ENCODE measurements at regions of chr9 and their contacts with region 1.

Region 1: DNA sequence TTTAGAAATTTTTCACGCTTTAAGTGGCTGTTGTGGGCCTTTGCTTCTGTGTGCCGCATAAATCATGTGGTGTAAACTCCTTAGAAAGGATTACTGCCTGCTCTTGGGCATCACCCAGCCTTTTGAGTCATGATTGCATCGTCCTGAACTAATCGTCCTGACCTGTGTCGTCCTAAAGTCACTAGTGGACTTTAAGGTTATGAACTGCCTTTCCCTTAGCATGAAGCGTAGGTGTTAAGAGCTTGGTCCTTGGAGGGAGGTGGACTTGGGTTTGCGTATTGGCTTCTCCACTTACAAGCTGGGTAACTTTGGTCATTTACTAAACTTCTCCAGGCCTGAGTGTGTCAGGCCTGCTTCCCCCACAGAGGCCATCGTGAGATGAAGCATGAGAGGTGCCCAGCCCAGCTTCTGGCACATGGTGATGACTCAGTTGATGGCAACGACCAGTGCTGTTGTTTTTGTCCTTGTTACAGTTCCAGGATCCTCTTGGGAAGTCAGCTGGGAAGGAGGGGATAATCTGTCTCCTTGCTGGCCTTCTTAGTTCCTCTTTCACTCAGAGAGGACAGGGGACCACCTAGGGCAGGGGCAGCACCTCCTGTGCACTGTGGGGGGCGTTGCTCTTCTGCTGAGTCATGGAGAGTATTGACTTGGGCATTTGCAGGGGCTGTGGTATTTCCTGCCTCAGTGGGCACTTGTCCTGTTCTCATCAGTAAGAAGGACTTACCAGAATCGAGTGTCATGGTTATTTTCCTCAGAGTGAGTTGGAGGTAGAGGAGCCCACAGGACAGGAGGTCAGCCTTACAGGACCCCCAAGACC is 54.2 kb upstream of the NCS1 start:
- DNase-seq: no peak
- ATAC-seq: no peak
- H3K4me3 ChIP-seq: no peak overlapping the region
- H3K27ac ChIP-seq: no peak overlapping the region
- H3K4me1 ChIP-seq: peaks cover 8% of the 10 kb centered on the region
- H3K27me3 ChIP-seq: no peaks in the 10 kb centered on the region
- CTCF ChIP-seq: no peak
- EP300 ChIP-seq: no peak
- POLR2A ChIP-seq: no peak
- RAD21 ChIP-seq: no peak

Region 2: DNA sequence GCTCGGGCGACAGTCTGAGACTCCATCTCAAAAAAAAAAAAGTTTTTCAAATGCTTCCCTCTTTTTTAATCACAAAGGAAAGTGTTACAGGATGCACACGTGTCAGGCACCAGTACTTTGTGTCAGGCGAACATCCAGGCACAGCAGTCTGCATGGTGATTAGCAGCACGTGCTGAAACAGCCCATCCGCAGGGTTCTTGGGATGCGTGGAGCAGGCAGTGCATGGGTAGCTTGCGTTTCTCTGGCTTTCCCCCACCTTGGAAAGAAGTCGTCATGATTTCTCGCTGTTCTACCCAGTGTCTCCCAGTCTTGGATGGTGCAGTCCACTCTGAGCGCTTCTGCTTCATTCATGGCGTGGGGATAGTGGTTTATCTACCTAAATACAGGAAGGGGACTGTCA is 28.9 kb before region 1 on chr9:
- CTCF ChIA-PET with region 1: no interaction called
- POLR2A ChIA-PET with region 1: interaction called, 10 read pairs
- RAD21 ChIA-PET with region 1: no interaction called
- SMC1A ChIA-PET with region 1: interaction called, 4 read pairs
- in situ Hi-C with region 1: no loop called
- intact Hi-C with region 1: no loop called
- DNase-seq: no peak
- ATAC-seq: no peak
- H3K4me3 ChIP-seq: no peak overlapping the region
- H3K27ac ChIP-seq: no peak overlapping the region
- H3K4me1 ChIP-seq: no peaks in the 10 kb centered on the region
- H3K27me3 ChIP-seq: no peaks in the 10 kb centered on the region
- CTCF ChIP-seq: no peak
- EP300 ChIP-seq: no peak
- POLR2A ChIP-seq: no peak
- RAD21 ChIP-seq: no peak

Region 3: GRCh38 chr9:130128733-130129431 is 10.9 kb after region 1 on chr9:
- CTCF ChIA-PET with region 1: interaction called, 3 read pairs
- POLR2A ChIA-PET with region 1: interaction called, 6 read pairs
- RAD21 ChIA-PET with region 1: interaction called, 3 read pairs
- SMC1A ChIA-PET with region 1: interaction called, 10 read pairs
- in situ Hi-C with region 1: no loop called
- intact Hi-C with region 1: no loop called
- DNase-seq: peak; percentile 79
- ATAC-seq: peak; percentile 94
- H3K4me3 ChIP-seq: peak overlapping the region; percentile 4; the same call in 1 of the 2 replicates
- H3K27ac ChIP-seq: peak overlapping the region; percentile 94
- H3K4me1 ChIP-seq: peaks cover 21% of the 10 kb centered on the region
- H3K27me3 ChIP-seq: no peaks in the 10 kb centered on the region
- CTCF ChIP-seq: no peak
- EP300 ChIP-seq: peak; percentile 96 to 98; a peak in 3 of 4 replicates
- POLR2A ChIP-seq: peak; percentile 64; the same call in 1 of the 2 replicates
- RAD21 ChIP-seq: 0 out of 2 replicates have a peak, but pooled peaks have one; percentile 6

Measured in GM12878 (cell line).